Activated CD4-positive, alpha-beta T cell treated with anti-CD3 and anti-CD28 coated beads, Interleukin-2, amount 10 ng/mL, durations not matched to agents 7 days and 5 days (primary cell): ENCODE measurements at regions of chr17 and their contacts with region 1.

Region 1: DNA sequence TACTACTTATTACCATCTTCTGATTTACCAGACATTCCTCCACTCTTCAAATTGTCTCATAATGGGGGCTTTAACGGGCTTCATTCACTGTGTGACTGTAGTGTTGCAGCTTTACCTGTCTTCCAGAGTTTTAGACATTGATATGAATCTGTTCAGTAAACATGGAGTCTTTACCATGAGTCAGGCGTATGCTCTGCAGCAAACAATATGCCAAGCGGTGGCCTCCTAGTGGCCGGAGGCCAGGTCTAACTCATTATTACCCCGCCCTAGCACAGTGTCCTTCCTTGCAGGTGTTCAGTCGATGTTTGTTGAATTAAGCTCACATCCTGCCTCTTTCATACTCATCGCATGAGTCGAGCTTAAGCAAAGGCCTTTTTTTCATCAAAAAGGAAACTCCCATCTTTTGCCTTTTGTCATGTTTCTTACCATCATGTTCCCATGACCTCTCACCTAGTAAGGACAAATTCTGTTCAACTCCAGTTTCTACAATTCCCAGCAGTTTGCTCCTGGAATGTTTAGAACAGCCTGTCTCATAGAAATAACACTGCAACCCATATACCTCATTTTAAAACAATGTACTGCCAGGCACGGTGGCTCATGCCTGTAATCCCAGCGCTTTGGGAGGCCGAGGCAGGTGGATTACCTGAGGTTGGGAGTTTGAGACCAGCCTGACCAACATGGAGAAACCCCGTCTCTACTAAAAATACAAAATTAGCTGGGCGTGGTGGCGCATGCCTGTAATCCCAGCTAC is 39.4 kb downstream of the TUBD1 start:
- DNase-seq: peak; percentile 68
- H3K4me3 Mint-ChIP-seq: no peak overlapping the region
- H3K27ac Mint-ChIP-seq: peak overlapping the region; percentile 73
- H3K4me1 Mint-ChIP-seq: peaks cover 55% of the 10 kb centered on the region
- H3K27me3 Mint-ChIP-seq: no peaks in the 10 kb centered on the region

Region 2: GRCh38 chr17:59668816-59669215 is 184.5 kb before region 1 on chr17:
- CTCF ChIA-PET with region 1: no interaction called
- POLR2A ChIA-PET with region 1: no interaction called
- DNase-seq: no peak
- H3K4me3 Mint-ChIP-seq: no peak overlapping the region
- H3K27ac Mint-ChIP-seq: no peak overlapping the region
- H3K4me1 Mint-ChIP-seq: peaks cover 24% of the 10 kb centered on the region
- H3K27me3 Mint-ChIP-seq: no peaks in the 10 kb centered on the region

Region 3: GRCh38 chr17:59837308-59838051 is 15.9 kb before region 1 on chr17:
- CTCF ChIA-PET with region 1: interaction called, 11 read pairs
- POLR2A ChIA-PET with region 1: interaction called, 4 read pairs
- DNase-seq: peak; percentile 91
- H3K4me3 Mint-ChIP-seq: peak overlapping the region; percentile 93
- H3K27ac Mint-ChIP-seq: peak overlapping the region; percentile 98
- H3K4me1 Mint-ChIP-seq: peaks cover 45% of the 10 kb centered on the region
- H3K27me3 Mint-ChIP-seq: no peaks in the 10 kb centered on the region

Region 4: GRCh38 chr17:59842901-59843652 is 10.3 kb before region 1 on chr17:
- CTCF ChIA-PET with region 1: interaction called, 11 read pairs
- POLR2A ChIA-PET with region 1: interaction called, 12 read pairs
- DNase-seq: no peak
- H3K4me3 Mint-ChIP-seq: peak overlapping the region; percentile 93
- H3K27ac Mint-ChIP-seq: peak overlapping the region; percentile 98
- H3K4me1 Mint-ChIP-seq: peaks cover 60% of the 10 kb centered on the region
- H3K27me3 Mint-ChIP-seq: no peaks in the 10 kb centered on the region